ENCODE measurements at regions of chr11 and their contacts with region 1.

Region 1: DNA sequence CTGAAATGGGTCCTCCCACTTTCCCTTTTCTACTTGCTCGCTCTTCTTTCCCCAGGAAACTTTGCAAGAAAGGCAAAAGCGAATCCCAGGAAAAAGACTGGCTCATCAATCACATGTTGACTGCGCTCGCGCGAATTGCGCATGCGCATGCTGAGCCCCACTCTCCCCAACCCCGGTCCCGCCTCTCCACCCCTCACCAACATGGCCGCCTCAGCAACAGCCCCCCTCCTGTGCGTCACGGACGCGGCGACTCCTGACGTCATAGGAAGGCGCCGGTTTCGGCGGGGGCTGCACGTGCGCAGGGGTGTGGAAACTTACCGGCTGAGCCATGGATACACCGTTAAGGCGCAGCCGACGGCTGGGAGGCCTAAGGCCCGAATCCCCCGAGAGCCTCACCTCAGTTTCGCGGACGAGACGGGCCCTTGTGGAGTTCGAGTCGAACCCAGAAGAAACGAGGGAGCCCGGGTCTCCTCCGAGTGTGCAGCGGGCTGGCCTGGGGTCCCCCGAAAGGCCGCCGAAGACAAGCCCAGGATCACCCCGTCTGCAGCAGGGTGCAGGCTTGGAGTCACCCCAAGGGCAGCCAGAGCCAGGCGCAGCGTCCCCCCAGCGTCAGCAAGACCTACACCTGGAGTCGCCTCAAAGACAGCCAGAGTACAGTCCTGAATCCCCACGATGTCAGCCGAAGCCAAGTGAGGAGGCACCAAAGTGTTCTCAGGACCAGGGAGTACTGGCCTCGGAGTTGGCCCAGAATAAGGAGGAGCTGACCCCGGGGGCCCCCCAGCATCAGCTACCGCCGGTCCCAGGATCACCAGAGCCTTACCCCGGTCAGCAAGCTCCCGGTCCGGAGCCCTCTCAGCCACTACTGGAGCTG is at the start of gene CCDC86:
- DNase-seq: peak; percentile 100
- CTCF ChIP-seq: no peak

Region 2: DNA sequence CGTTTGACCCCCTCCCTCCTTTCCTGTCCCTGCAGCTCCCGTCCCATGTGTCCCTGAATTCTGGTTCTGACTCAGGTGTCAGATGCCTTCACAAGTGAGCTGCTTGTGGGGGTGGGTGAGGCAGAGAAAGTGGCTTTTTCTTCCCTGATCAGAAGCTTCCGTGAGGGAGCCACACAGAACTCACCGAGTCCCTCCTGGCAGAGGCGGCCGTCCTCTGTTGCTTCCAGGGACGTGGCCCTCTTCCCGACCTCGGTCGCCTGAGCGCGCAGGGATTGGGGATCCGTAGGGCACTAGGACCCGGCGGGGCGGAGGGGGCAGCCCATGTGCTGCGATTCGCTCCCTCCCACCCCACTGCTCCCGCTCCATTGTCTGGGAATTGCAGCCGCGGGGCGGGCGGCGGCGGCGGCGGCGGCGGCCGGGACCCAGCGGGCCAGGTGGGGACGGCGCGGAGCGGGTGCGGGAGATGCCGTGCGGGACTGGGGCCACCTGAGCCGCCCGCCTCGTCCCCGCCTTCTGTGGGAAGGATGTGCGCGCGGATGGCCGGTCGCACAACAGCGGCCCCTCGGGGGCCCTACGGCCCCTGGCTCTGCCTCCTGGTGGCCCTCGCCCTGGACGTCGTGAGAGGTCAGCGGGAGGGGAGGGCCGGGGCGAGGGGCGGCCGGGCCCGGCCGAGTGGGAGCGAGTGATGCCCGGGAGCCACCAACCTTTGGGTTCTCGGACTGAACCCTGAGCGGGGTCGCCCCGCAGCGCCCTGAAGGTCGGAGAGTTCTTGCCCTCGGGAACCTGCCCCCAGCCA is 82.3 kb after region 1 on chr11 and contains the start of gene TMEM132A:
- in situ Hi-C with region 1: no loop called
- DNase-seq: peak; percentile 79
- CTCF ChIP-seq: no peak

Region 3: GRCh38 chr11:61187505-61188130 is 345.6 kb after region 1 on chr11:
- in situ Hi-C with region 1: loop called (anchors 25 kb)
- DNase-seq: peak; percentile 87
- CTCF ChIP-seq: peak; percentile 93

Measured in GM13976 (cell line).